ENCODE measurements at regions of chr10 and their contacts with region 1.

Region 1: DNA sequence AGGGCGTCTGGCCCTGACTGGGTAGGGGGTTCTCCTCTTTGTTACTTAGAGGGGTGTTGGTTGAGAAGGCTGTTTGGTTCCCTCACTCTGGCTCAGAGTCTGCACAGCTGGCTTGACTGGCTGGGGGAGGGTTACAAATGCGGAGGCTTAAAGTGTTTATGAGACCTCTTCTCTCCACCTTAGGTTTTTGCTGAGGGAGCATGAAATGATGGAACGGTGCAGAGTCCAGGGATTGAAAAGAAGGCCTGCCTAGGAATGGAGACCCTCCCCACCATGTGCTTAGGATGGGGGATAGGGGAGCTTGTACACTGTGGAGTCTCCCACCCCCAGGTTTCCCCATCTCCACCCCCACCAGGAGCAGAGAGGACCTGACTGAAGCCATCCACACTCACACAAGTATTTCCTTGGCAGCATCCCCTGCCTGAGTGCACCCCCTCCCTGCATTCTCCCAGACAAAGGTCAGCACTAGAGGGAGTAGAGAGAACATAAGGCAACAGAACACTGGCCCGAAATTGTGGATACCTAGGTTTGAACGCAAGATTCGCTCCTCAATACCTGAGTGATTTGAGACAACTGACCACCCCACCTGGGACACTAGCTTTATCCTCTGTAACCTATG is 1.7 kb upstream of the LDB1 start:
- DNase-seq: no peak
- H3K4me3 Mint-ChIP-seq: peak overlapping the region; percentile 93
- H3K27ac Mint-ChIP-seq: no peak overlapping the region
- H3K4me1 Mint-ChIP-seq: peaks cover 23% of the 10 kb centered on the region
- H3K27me3 Mint-ChIP-seq: no peaks in the 10 kb centered on the region

Region 2: GRCh38 chr10:102132563-102133372 is 10.9 kb after region 1 on chr10 and contains the start of gene PPRC1:
- CTCF ChIA-PET with region 1: interaction called, 24 read pairs
- intact Hi-C with region 1: loop called (anchors 1 kb)
- DNase-seq: peak; percentile 99
- H3K4me3 Mint-ChIP-seq: peak within 1 kb of the TSS; percentile 97
- H3K27ac Mint-ChIP-seq: peak within 1 kb of the TSS; percentile 96
- H3K4me1 Mint-ChIP-seq: peaks cover 42% of the 10 kb centered on the region
- H3K27me3 Mint-ChIP-seq: no peaks in the 10 kb centered on the region
- total RNA-seq, gene PPRC1: 54.6 to 55.0 TPM

Measured in activated naive CD4-positive, alpha-beta T cell treated with anti-CD3 and anti-CD28 coated beads for 36 hours (primary cell).